ENCODE measurements at regions of chrX and their contacts with region 1.

Region 1: GRCh38 chrX:94645727-94646126 is 971.7 kb downstream of the FAM133A start:
- DNase-seq: no peak
- H3K27ac ChIP-seq: no peak overlapping the region
- CTCF ChIP-seq: no peak

Region 2: DNA sequence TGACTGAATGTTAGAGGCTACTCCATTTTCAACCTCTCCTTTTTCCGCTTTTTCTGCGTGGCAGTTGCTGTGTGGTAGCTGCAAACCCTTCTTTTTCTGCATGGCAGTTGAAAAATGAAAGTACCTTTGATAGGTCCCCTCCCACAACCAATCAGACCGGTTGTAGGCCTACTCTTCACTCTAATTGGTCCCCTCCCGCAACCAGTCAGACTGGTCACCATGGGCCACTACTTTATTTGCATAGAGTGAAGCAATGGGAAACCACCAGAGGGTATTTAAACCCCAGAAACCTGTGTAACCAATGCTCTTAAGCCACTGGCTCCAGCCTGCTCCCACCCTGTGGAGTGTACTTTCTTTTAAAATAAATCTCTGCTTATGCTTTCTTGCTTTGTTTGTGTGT is 93.9 kb before region 1 on chrX:
- CTCF ChIA-PET with region 1: interaction called, 11 read pairs
- POLR2A ChIA-PET with region 1: no interaction called
- DNase-seq: no peak
- H3K27ac ChIP-seq: no peak overlapping the region
- CTCF ChIP-seq: no peak

Measured in RWPE1 (cell line).